GM23248 (cell line): ENCODE measurements at regions of chr7 and their contacts with region 1.

Region 1: GRCh38 chr7:8418629-8419245 is 14.7 kb upstream of the NXPH1 start:
- DNase-seq: peak; percentile 73
- H3K4me3 ChIP-seq: no peak overlapping the region
- H3K27ac ChIP-seq: no peak overlapping the region
- H3K4me1 ChIP-seq: no peaks in the 10 kb centered on the region
- H3K27me3 ChIP-seq: no peaks in the 10 kb centered on the region

Region 2: GRCh38 chr7:7761340-7761980 is 657.3 kb before region 1 on chr7:
- in situ Hi-C with region 1: no loop called
- DNase-seq: peak; percentile 74
- H3K4me3 ChIP-seq: peak overlapping the region; percentile 85
- H3K27ac ChIP-seq: peak overlapping the region; percentile 58
- H3K4me1 ChIP-seq: peaks cover 12% of the 10 kb centered on the region
- H3K27me3 ChIP-seq: no peaks in the 10 kb centered on the region

Region 3: GRCh38 chr7:10412422-10413019 is 1993.8 kb after region 1 on chr7:
- in situ Hi-C with region 1: loop called (anchors 25 kb)
- DNase-seq: peak; percentile 53
- H3K4me3 ChIP-seq: no peak overlapping the region
- H3K27ac ChIP-seq: no peak overlapping the region
- H3K4me1 ChIP-seq: no peaks in the 10 kb centered on the region
- H3K27me3 ChIP-seq: no peaks in the 10 kb centered on the region